Mucosa of descending colon (tissue), 3 donors: ENCODE measurements at regions of chr6 and their contacts with region 1.

Region 1: GRCh38 chr6:108052706-108053105 is 21.8 kb downstream of the OSTM1 start:
- DNase-seq: no peak
- ATAC-seq: no peak
- H3K4me3 ChIP-seq: no peak overlapping the region
- H3K4me1 ChIP-seq: no peaks in the 10 kb centered on the region
- CTCF ChIP-seq: no peak

Region 2: DNA sequence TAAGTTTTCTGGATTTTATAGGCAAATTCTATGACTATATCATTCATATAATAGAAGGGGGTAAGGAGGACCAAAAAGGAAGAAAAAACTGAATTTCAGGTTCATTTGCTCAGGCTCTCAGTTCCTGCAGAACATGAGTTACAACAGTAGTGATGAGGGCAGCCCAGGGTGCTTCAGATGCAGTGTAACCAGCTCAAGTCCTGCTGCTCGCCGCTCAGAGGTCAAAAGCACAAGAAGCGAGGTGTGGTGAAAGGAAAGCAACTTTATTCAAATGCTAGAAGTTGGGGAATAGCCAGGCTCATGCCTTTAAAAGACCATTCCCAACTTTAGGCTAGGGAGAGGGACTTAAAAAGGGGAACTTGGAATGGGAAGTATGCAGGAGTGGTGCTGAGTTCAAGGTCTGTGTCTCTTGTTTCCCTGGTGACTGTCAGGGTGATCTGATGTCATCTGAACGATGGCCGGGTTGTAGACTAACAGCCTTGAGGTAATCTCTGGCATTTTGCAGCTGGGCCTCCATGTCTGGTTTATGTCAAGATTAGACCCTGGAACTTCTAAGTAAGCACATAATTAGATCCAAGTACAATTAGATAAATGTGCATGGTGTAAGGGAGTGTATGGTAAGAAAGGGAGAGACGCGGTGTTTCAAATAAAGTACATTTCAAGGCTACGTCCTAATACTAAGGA is 80.2 kb before region 1 on chr6:
- intact Hi-C with region 1: loop called in 1 of 2 experiments (anchors 5 kb)
- DNase-seq: no peak
- ATAC-seq: no peak
- H3K4me3 ChIP-seq: no peak overlapping the region
- H3K4me1 ChIP-seq: no peaks in the 10 kb centered on the region
- CTCF ChIP-seq: no peak